ENCODE measurements at regions of chr17 and their contacts with region 1.

Region 1: DNA sequence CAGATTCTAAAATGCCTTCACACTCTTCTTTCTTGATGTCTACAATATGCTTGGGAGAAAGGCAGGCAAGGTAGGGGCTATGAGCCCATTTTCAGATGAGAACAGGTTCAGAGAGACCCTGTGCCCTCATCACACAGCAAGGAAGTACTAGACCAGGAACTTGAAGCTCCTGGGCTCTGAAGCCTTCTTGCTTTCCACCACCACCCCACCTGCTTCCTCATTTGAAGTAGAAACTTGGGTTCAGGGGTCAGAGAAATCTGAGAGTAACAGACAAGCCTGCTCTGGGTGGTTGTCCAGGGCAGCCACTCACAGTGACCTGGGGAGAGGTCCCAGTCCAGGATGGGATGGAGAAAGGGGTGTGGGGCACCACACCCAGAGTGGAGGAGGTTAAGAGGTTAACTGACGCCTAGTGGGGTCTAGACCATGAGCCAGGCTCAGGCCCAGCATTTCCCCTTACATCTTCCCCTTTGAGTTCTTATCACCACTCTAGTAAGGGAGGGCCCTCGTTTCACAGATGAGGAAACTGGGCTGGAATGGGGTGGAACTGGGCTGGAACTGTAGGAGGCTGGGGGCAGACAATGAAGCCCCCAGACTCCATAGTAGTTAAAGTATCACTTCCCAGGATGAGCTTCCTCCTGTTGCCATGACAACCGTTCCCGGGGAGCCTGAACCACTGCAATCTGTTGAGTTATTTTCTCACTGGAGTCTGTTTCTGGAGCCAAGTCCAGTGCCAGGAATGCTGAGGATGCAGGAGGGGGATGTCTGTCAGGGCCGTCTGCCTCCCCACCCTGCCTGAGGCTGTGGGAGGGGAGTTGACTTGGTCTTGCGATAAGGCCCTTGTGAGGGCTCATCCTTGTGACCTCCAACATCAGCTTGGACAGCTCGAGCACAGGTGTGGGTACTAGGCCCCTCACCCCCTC is 16.2 kb upstream of the PHF12 start:
- H3K4me3 ChIP-seq: no peak overlapping the region
- H3K27ac ChIP-seq: no peak overlapping the region
- H3K4me1 ChIP-seq: no peaks in the 10 kb centered on the region
- CTCF ChIP-seq: no peak

Region 2: DNA sequence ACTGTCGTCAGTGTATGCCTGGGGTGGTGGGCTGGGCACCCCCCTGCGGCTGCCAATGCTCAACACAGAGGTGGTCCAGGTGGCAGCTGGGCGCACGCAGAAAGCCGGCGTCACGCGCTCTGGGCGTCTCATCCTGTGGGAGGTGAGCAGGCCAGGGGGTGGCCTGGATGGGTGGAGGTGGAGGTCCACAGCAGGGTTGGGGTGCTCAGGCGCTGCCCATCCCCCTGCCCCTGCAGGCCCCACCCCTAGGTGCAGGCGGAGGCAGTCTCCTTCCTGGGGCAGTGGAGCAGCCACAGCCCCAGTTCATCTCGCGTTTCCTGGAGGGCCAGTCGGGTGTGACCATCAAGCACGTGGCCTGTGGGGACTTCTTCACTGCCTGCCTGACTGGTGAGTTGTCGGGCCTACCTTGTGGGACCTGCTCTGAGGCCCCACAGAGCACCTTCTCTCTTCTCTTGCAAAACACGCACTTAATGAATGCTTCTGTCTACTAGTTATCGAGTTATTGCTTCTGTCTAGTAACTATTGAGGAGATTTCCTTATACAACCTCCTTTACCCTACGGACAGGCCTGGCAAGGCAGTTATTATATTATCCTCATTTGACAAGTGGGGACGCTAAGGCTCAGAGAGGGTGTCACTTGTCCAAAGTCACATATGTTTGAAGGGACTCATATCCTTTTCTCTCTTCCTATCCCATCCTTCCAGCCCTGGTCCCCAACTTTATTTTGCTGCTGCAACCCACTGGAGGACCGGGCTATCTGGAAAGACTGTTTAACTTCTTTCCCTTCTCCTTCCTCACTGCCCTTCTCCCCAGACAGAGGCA is 229.4 kb before region 1 on chr17:
- CTCF ChIA-PET with region 1: no interaction called
- POLR2A ChIA-PET with region 1: no interaction called
- H3K4me3 ChIP-seq: no peak overlapping the region
- H3K27ac ChIP-seq: no peak overlapping the region
- H3K4me1 ChIP-seq: 0 out of 2 replicates have a peak, but pooled peaks cover 3% of the 10 kb centered on the region
- CTCF ChIP-seq: no peak

Region 3: GRCh38 chr17:28828294-28829040 is 139.0 kb before region 1 on chr17:
- CTCF ChIA-PET with region 1: no interaction called
- POLR2A ChIA-PET with region 1: no interaction called
- H3K4me3 ChIP-seq: no peak overlapping the region
- H3K27ac ChIP-seq: no peak overlapping the region
- H3K4me1 ChIP-seq: 0 out of 2 replicates have a peak, but pooled peaks cover 2% of the 10 kb centered on the region
- CTCF ChIP-seq: no peak

Region 4: GRCh38 chr17:29007955-29008361 is 40.5 kb after region 1 on chr17:
- CTCF ChIA-PET with region 1: interaction called, 12 read pairs
- POLR2A ChIA-PET with region 1: no interaction called
- H3K4me3 ChIP-seq: no peak overlapping the region
- H3K27ac ChIP-seq: no peak overlapping the region
- H3K4me1 ChIP-seq: 0 out of 2 replicates have a peak, but pooled peaks cover 4% of the 10 kb centered on the region
- CTCF ChIP-seq: no peak

Region 5: GRCh38 chr17:29042679-29043538 is 75.4 kb after region 1 on chr17 and contains the start of gene PIPOX:
- CTCF ChIA-PET with region 1: interaction called, 14 read pairs
- POLR2A ChIA-PET with region 1: no interaction called
- H3K4me3 ChIP-seq: no peak within 1 kb of the TSS
- H3K27ac ChIP-seq: no peak within 1 kb of the TSS
- H3K4me1 ChIP-seq: peaks cover 5% of the 10 kb centered on the region
- CTCF ChIP-seq: peak; percentile 38

Region 6: DNA sequence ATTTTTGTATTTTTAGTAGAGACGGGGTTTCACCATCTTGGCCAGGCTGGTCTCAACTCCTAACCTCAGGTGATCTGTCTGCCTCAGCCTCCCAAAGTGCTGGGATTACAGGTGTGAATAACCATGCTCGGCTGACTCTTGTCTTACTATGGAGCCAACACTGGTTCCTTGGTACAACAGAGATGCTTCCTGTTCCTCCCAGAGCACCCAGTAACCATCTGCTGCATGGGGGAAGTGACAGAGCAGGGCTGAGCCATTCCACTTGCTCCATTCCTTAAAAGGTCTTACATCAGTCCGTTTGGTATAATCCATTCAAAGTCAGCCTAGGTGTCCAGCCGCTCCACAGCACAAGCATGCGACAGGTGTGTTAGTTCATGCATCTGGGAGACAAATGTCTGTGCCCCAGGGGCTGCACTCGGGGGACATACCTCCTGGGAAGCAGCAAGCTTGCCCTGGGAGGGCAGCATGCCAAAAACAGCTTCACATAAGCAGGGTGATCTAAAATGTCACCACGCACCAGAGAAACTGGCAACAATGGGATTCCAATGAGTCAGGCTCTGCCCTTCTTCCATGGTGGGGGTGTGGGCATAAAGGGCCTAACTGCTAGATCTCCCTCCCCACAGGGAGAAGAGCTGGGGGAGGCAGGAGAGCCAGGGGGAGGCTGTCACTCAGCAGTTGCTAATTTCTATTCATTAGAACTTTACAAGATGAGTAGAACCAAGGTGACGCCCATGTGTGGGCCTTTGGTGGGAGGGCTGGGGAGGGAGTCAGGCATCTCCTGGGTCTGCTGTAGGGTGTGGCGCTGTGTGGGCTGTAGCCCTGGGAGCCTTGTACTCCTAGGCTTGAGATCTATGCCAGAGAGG is 110.9 kb after region 1 on chr17:
- CTCF ChIA-PET with region 1: interaction called, 15 read pairs
- POLR2A ChIA-PET with region 1: no interaction called
- H3K4me3 ChIP-seq: no peak overlapping the region
- H3K27ac ChIP-seq: no peak overlapping the region
- H3K4me1 ChIP-seq: no peaks in the 10 kb centered on the region; the same call in 1 of the 2 replicates
- CTCF ChIP-seq: no peak

Region 7: GRCh38 chr17:29102741-29103181 is 135.3 kb after region 1 on chr17:
- CTCF ChIA-PET with region 1: interaction called, 680 read pairs
- POLR2A ChIA-PET with region 1: interaction called, 4 read pairs
- H3K4me3 ChIP-seq: no peak overlapping the region
- H3K27ac ChIP-seq: no peak overlapping the region
- H3K4me1 ChIP-seq: no peaks in the 10 kb centered on the region
- CTCF ChIP-seq: no peak

Region 8: GRCh38 chr17:29116804-29117772 is 149.6 kb after region 1 on chr17:
- CTCF ChIA-PET with region 1: interaction called, 680 read pairs
- POLR2A ChIA-PET with region 1: interaction called, 15 read pairs
- H3K4me3 ChIP-seq: no peak overlapping the region
- H3K27ac ChIP-seq: no peak overlapping the region
- H3K4me1 ChIP-seq: no peaks in the 10 kb centered on the region
- CTCF ChIP-seq: peak; percentile 89

Region 9: GRCh38 chr17:29148790-29149430 is 181.4 kb after region 1 on chr17:
- CTCF ChIA-PET with region 1: interaction called, 11 read pairs
- POLR2A ChIA-PET with region 1: no interaction called
- H3K4me3 ChIP-seq: peak overlapping the region; percentile 44
- H3K27ac ChIP-seq: peak overlapping the region; percentile 48
- H3K4me1 ChIP-seq: peaks cover 10% of the 10 kb centered on the region
- CTCF ChIP-seq: peak; percentile 97